Caco-2 (cell line): ENCODE measurements at regions of chr13 and their contacts with region 1.

Region 1: GRCh38 chr13:38636772-38637171 is 50.1 kb upstream of the FREM2 start:
- DNase-seq: peak; percentile 77 to 84
- H3K4me3 ChIP-seq: no peak overlapping the region
- H3K4me3 Mint-ChIP-seq: peak overlapping the region; percentile 56
- H3K27ac Mint-ChIP-seq: peak overlapping the region; percentile 49
- H3K4me1 ChIP-seq: peaks cover 54% of the 10 kb centered on the region
- H3K4me1 Mint-ChIP-seq: peaks cover 47% of the 10 kb centered on the region
- H3K27me3 ChIP-seq: no peaks in the 10 kb centered on the region
- H3K27me3 Mint-ChIP-seq: no peaks in the 10 kb centered on the region
- CTCF ChIP-seq: no peak

Region 2: GRCh38 chr13:38577048-38577447 is 59.7 kb before region 1 on chr13:
- CTCF ChIA-PET with region 1: interaction called, 3 read pairs
- POLR2A ChIA-PET with region 1: no interaction called
- intact Hi-C with region 1: loop called (anchors 2 kb)
- DNase-seq: peak in 1 of 2 experiments; percentile 44
- H3K4me3 ChIP-seq: no peak overlapping the region
- H3K4me3 Mint-ChIP-seq: no peak overlapping the region
- H3K27ac Mint-ChIP-seq: no peak overlapping the region
- H3K4me1 ChIP-seq: no peaks in the 10 kb centered on the region
- H3K4me1 Mint-ChIP-seq: peaks cover 6% of the 10 kb centered on the region
- H3K27me3 ChIP-seq: no peaks in the 10 kb centered on the region
- H3K27me3 Mint-ChIP-seq: peaks cover 5% of the 10 kb centered on the region
- CTCF ChIP-seq: peak; percentile 17 to 22

Region 3: GRCh38 chr13:38602261-38602660 is 34.5 kb before region 1 on chr13:
- CTCF ChIA-PET with region 1: no interaction called
- POLR2A ChIA-PET with region 1: no interaction called
- intact Hi-C with region 1: loop called (anchors 5 kb)
- DNase-seq: no peak
- H3K4me3 ChIP-seq: no peak overlapping the region
- H3K4me3 Mint-ChIP-seq: no peak overlapping the region
- H3K27ac Mint-ChIP-seq: no peak overlapping the region
- H3K4me1 ChIP-seq: no peaks in the 10 kb centered on the region
- H3K4me1 Mint-ChIP-seq: no peaks in the 10 kb centered on the region
- H3K27me3 ChIP-seq: no peaks in the 10 kb centered on the region
- H3K27me3 Mint-ChIP-seq: no peaks in the 10 kb centered on the region
- CTCF ChIP-seq: no peak

Region 4: DNA sequence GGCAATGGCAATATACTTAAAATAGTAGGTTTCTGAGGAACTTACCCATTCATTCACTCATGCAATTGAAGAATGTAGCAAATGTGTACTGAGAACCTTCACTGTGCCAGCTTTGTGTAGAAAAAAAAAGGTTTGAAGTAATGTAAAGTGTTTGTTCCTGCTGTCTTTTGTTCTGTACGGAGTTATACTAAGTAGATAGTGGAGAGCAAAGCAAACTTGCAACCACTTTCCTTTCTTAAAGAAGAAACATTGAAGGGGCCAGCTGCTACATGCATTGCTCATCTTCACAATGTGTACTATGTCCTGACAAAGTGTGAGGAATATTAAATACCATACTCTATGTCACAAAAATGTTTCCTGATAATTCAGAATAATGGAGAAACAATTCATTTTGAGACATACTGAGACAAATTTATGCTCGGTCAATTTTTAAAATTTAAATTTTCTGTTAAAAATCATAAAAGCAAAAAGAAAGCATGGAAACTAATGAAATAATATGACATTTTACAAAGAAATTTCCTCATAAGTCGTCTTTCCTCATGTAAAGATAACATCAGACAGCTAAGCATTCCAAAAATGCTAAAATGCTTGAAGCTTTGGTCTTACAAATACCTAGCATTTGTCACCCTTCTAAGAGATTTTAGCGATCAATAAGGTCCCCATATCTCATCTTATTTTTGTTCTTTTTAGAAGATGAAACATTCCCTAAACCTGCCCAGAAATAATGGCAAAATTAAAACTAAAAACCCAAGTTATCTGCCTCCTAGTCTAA is 18.6 kb before region 1 on chr13:
- CTCF ChIA-PET with region 1: no interaction called
- POLR2A ChIA-PET with region 1: no interaction called
- intact Hi-C with region 1: no loop called
- DNase-seq: no peak
- H3K4me3 ChIP-seq: no peak overlapping the region
- H3K4me3 Mint-ChIP-seq: no peak overlapping the region
- H3K27ac Mint-ChIP-seq: no peak overlapping the region
- H3K4me1 ChIP-seq: peaks cover 16% of the 10 kb centered on the region
- H3K4me1 Mint-ChIP-seq: no peaks in the 10 kb centered on the region
- H3K27me3 ChIP-seq: no peaks in the 10 kb centered on the region
- H3K27me3 Mint-ChIP-seq: no peaks in the 10 kb centered on the region
- CTCF ChIP-seq: no peak

Region 5: DNA sequence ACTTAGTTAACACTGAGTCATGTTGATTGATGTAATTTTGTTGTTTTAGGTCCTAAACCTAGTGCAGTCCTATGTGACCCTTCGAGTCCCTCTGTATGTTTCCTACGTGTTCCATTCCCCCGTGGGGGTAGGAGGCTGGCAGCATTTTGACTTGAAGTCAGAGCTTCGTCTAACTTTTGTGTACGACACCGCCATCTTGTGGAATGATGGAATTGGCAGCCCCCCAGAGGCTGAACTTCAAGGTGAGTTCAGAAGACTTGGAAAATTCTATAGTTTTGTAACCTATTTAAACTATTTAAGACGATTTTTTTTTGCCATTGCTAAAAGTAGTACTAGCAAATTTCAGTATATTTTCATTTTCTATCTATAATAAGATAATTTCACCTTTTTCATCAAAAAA is 235.9 kb after region 1 on chr13:
- CTCF ChIA-PET with region 1: no interaction called
- POLR2A ChIA-PET with region 1: no interaction called
- intact Hi-C with region 1: loop called (anchors 5 kb)
- DNase-seq: peak; percentile 67
- H3K4me3 ChIP-seq: no peak overlapping the region
- H3K4me3 Mint-ChIP-seq: no peak overlapping the region
- H3K27ac Mint-ChIP-seq: no peak overlapping the region
- H3K4me1 ChIP-seq: peaks cover 14% of the 10 kb centered on the region; the same call in 1 of the 2 replicates
- H3K4me1 Mint-ChIP-seq: peaks cover 12% of the 10 kb centered on the region
- H3K27me3 ChIP-seq: no peaks in the 10 kb centered on the region
- H3K27me3 Mint-ChIP-seq: no peaks in the 10 kb centered on the region
- CTCF ChIP-seq: peak; percentile 69 to 84